Activated CD4-positive, alpha-beta T cell treated with anti-CD3 and anti-CD28 coated beads, Interleukin-2, amount 10 ng/mL, durations not matched to agents 7 days and 5 days (primary cell): ENCODE measurements at regions of chr14 and their contacts with region 1.

Region 1: GRCh38 chr14:24662753-24663152 is 28.8 kb upstream of the GZMB start:
- DNase-seq: no peak
- H3K4me3 Mint-ChIP-seq: no peak overlapping the region
- H3K27ac Mint-ChIP-seq: peak overlapping the region; percentile 48
- H3K4me1 Mint-ChIP-seq: peaks cover 84% of the 10 kb centered on the region
- H3K27me3 Mint-ChIP-seq: peaks cover 8% of the 10 kb centered on the region

Region 2: GRCh38 chr14:24634158-24634557 is 28.6 kb before region 1 on chr14 and contains the start of gene GZMB:
- CTCF ChIA-PET with region 1: interaction called, 12 read pairs
- POLR2A ChIA-PET with region 1: no interaction called
- DNase-seq: peak; percentile 59
- H3K4me3 Mint-ChIP-seq: peak within 1 kb of the TSS; percentile 65
- H3K27ac Mint-ChIP-seq: peak within 1 kb of the TSS; percentile 85
- H3K4me1 Mint-ChIP-seq: peaks cover 43% of the 10 kb centered on the region
- H3K27me3 Mint-ChIP-seq: peaks cover 7% of the 10 kb centered on the region
- total RNA-seq, gene GZMB: 77.5 to 105 TPM